ENCODE measurements at regions of chrX and their contacts with region 1.

Region 1: DNA sequence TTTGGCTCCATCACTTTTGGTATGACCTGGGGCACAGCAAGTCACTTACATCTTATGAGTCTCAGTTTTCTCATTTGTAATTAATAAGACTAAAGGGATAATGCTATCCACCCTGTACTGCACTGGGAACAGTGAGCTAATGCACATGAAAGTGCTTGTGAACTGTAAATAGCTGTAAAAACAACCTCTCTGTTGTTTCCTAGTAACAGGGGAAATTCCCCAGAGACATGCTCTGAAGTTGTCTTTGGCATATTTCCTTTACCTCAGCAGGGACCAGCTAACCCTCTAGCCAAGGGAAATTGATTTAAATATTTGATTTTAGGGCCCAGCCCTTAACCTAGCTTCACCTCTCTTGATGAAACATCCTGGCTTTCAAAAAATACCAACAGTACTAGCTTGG is 6.1 kb upstream of the CYSLTR1 start:
- DNase-seq: no peak
- H3K4me3 Mint-ChIP-seq: no peak overlapping the region
- H3K27ac Mint-ChIP-seq: peak overlapping the region; percentile 75
- H3K4me1 Mint-ChIP-seq: peaks cover 52% of the 10 kb centered on the region
- H3K27me3 Mint-ChIP-seq: no peaks in the 10 kb centered on the region

Region 2: DNA sequence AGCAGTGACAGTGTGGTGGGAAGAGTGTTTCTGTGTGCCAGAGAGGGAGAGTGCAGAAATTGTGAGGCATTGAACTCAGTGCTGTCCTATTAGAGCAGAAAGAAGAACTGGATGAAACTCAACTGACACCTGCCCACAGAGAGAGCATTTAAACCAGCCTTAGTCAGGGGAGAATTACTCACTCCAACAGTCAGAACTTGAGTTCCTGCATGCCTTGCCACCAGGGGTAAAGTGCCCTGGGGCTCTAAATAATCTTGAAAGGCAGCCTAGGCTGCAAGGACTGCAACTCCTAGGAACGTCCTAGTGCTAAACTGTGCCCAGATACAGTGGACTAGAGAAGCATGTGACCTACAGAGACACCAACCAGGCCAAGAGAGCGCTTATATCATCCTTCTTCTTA is 18.9 kb before region 1 on chrX:
- intact Hi-C with region 1: loop called (anchors 2 kb)
- DNase-seq: no peak
- H3K4me3 Mint-ChIP-seq: peak overlapping the region; percentile 19
- H3K27ac Mint-ChIP-seq: peak overlapping the region; percentile 73
- H3K4me1 Mint-ChIP-seq: peaks cover 47% of the 10 kb centered on the region
- H3K27me3 Mint-ChIP-seq: no peaks in the 10 kb centered on the region

Region 3: DNA sequence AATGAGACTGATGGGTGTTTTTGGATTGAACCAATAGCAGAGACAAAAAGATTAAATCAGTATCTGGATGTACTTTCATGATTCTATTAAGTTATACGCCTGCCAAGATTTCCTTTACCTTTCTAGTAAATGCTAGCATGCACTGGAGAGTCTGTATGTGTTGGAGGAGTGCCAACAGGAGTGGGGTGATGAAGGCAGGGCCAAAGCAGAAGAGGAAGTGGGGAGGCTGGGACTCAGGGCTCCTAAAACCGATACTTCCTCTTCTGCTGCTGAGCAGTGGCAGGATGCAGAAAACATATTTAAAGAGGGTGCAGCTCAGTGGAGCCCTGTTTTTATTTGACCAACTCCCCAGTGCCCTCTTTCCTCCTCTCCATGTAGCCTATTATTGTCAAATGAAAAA is 11.7 kb before region 1 on chrX:
- intact Hi-C with region 1: loop called (anchors 1 kb)
- DNase-seq: peak; percentile 38
- H3K4me3 Mint-ChIP-seq: peak overlapping the region; percentile 33
- H3K27ac Mint-ChIP-seq: peak overlapping the region; percentile 89
- H3K4me1 Mint-ChIP-seq: peaks cover 30% of the 10 kb centered on the region
- H3K27me3 Mint-ChIP-seq: no peaks in the 10 kb centered on the region